SK-N-SH (cell line): ENCODE measurements at regions of chr3 and their contacts with region 1.

Region 1: GRCh38 chr3:11155341-11156025 is 1.2 kb downstream of the HRH1 start:
- DNase-seq: peak; percentile 86
- H3K4me3 ChIP-seq: peak overlapping the region; percentile 71 to 86
- H3K27ac ChIP-seq: peak overlapping the region in 1 of 2 experiments; percentile 85; a peak in 2 of 4 replicates
- H3K4me1 ChIP-seq: peaks cover 7 to 15% of the 10 kb centered on the region in 2 experiments; a peak in 3 of 4 replicates
- H3K27me3 ChIP-seq: no peaks in the 10 kb centered on the region
- CTCF ChIP-seq: peak; percentile 85
- EP300 ChIP-seq: no peak
- RAD21 ChIP-seq: peak; percentile 81

Region 2: DNA sequence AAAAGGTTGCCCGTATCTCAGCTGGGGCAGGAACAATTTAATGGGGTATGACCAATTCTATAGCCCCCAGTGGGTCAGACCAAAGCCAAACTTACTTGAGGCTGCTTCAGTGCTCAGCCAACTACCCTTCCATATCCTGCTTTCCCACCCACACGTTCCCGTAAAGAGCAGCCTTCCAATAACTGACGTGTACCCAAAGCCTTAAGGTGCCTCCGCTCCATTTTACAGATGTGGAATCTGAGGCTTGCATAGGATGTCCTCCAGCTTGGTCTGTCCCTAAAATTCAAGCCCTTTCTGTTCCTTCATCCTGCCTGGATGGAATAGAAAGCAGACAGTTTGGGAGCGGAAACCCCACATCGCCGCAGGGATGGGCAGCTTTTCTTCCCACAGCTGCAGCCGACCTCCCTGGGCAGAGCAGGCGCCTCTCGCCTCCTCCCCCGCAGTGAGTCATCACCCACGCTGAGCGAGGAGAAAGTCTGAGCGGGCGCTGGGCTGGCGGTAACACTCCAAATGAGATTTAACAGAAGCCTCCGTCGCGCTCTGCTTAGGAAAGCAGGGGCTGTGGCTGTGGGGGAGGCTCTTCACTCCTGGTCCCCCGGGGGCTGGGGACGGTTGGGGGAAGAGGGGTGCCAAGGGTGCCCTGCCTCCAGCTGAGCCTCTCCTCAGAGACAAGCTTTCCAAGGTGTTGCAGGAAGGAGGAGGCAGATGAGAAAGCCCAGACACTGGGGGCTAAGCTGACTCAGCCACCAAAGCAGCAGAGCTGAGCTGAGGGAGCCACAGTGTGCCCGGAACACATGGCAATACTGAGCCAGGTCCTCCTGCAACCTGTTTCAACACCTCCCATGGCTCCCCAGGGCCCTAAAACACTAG is 59.0 kb before region 1 on chr3:
- CTCF ChIA-PET with region 1: interaction called, 13 read pairs
- POLR2A ChIA-PET with region 1: no interaction called
- DNase-seq: peak; percentile 91
- H3K4me3 ChIP-seq: peak overlapping the region; percentile 43 to 54
- H3K27ac ChIP-seq: peak overlapping the region; percentile 84 to 96
- H3K4me1 ChIP-seq: peaks cover 6 to 17% of the 10 kb centered on the region in 2 experiments; a peak in 1 of 4 replicates
- H3K27me3 ChIP-seq: no peaks in the 10 kb centered on the region
- CTCF ChIP-seq: no peak
- EP300 ChIP-seq: peak; percentile 53 to 81; a peak in 3 of 4 replicates
- RAD21 ChIP-seq: peak; percentile 17; the same call in 1 of the 2 replicates

Region 3: DNA sequence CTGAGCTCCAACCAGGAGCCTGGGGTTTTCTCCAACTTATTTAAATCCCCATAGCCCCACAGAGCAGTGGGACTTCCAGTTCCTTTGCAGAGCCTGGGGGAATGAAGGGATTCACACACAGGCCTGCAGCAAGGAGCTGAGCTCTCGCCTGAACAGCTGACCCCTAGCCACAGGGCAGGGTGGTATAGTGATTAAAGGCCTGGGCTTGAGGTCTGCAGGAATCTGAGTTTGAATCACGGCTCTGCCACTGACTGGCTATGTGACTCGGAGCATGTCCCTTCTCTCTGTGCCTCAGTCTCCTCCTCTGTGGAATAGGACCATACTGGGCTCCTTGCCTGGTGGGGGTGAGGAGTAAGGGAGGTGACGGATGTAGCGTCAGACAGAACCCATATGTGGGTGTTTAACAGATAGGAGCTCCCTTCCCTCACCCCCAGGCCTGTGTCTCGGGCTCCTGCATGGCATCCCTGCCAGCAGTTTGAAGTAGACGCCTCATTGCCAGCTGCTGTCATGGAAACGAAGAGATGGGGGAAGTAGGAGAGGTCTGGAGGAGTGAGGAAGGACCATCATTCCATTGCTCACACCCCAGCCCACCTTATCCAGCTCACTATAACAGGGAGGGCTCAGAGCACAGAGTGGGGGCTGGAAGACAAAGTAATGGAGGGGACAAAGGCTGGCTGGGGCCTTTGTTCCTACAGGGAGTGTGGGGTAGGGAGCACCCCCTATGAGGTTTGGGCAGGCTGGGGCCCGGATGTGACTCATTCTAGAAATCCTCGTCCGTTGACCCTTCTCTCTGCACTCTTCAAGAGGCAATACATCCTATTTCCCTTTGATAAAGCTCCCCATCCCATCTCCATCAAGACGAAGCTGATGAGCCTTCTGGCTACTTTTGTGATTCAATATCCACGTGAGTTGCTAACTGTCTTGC is 13.7 kb after region 1 on chr3:
- CTCF ChIA-PET with region 1: interaction called, 24 read pairs
- POLR2A ChIA-PET with region 1: no interaction called
- DNase-seq: no peak
- H3K4me3 ChIP-seq: no peak overlapping the region
- H3K27ac ChIP-seq: peak overlapping the region in 1 of 2 experiments; percentile 74; a peak in 2 of 4 replicates
- H3K4me1 ChIP-seq: peaks cover 7 to 30% of the 10 kb centered on the region in 2 experiments; a peak in 3 of 4 replicates
- H3K27me3 ChIP-seq: no peaks in the 10 kb centered on the region
- CTCF ChIP-seq: no peak
- EP300 ChIP-seq: peak in 1 of 2 experiments; percentile 49; a peak in 1 of 4 replicates
- RAD21 ChIP-seq: no peak

Region 4: DNA sequence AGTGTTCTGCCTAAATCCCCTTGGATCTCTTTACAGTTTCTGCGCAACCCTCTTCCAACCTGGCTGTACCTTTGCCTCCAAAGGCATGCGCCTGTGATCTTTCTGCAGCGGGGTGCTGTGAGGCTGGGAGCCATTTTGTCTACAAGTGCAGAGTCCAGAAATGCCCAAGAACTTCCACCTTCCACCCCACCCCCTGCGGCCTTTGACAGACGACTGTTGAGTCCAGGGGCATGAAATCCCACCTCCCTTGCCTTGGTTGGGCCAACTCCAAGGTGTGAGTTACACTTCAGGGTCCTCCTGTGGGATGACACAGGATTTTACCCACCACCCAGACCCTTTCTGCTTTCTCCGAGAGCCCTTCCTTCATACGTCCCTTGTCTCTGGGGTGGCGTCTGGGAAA is 22.9 kb after region 1 on chr3:
- CTCF ChIA-PET with region 1: interaction called, 10 read pairs
- POLR2A ChIA-PET with region 1: no interaction called
- DNase-seq: no peak
- H3K4me3 ChIP-seq: no peak overlapping the region
- H3K27ac ChIP-seq: no peak overlapping the region
- H3K4me1 ChIP-seq: peaks cover 0 to 3% of the 10 kb centered on the region in 2 experiments; a peak in 1 of 4 replicates
- H3K27me3 ChIP-seq: no peaks in the 10 kb centered on the region
- CTCF ChIP-seq: no peak
- EP300 ChIP-seq: no peak
- RAD21 ChIP-seq: no peak

Region 5: DNA sequence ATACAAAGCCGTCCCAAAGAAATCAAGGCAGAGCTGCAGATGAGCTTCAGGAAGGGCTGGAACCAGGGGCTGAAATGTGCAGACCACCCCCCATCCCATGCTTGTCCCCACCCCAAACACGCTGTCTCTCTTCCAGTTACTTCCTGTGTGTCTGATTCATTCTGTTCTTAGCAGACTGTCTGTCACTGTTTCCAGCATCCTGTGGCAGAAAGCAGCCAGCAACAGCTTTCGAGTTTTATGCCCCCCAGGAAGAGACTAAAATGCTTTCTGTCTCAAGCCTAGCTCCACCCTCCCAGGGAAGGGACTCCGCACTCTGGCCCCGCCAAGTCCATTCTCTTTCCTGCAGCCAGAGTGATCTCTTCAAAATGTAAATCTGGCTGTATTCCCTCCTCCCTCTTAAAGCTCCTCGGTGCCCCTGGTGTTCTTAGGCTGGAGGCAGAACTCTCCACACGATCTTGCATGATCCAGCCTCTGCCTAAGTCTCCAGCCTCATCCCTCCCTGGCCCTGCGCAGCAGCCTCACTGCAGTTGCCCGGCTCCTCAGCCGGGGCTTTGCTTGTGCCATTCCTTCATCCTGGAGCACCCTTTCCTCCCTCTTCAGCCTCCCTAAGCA is 40.3 kb after region 1 on chr3:
- CTCF ChIA-PET with region 1: interaction called, 17 read pairs
- POLR2A ChIA-PET with region 1: no interaction called
- DNase-seq: no peak
- H3K4me3 ChIP-seq: peak overlapping the region; percentile 14 to 47; a peak in 3 of 4 replicates
- H3K27ac ChIP-seq: peak overlapping the region; percentile 50 to 94
- H3K4me1 ChIP-seq: peaks cover 18 to 34% of the 10 kb centered on the region in 2 experiments
- H3K27me3 ChIP-seq: no peaks in the 10 kb centered on the region
- CTCF ChIP-seq: no peak
- EP300 ChIP-seq: peak in 1 of 2 experiments; percentile 27; a peak in 1 of 4 replicates
- RAD21 ChIP-seq: no peak

Region 6: GRCh38 chr3:11201246-11202024 is 46.0 kb after region 1 on chr3:
- CTCF ChIA-PET with region 1: interaction called, 41 read pairs
- POLR2A ChIA-PET with region 1: no interaction called
- DNase-seq: no peak
- H3K4me3 ChIP-seq: no peak overlapping the region
- H3K27ac ChIP-seq: peak overlapping the region; percentile 73 to 94
- H3K4me1 ChIP-seq: peaks cover 29 to 36% of the 10 kb centered on the region in 2 experiments
- H3K27me3 ChIP-seq: no peaks in the 10 kb centered on the region
- CTCF ChIP-seq: no peak
- EP300 ChIP-seq: peak in 1 of 2 experiments; percentile 70; a peak in 2 of 4 replicates
- RAD21 ChIP-seq: no peak

Region 7: GRCh38 chr3:11335056-11335608 is 179.6 kb after region 1 on chr3:
- CTCF ChIA-PET with region 1: interaction called, 72 read pairs
- POLR2A ChIA-PET with region 1: no interaction called
- DNase-seq: peak; percentile 58
- H3K4me3 ChIP-seq: no peak overlapping the region
- H3K27ac ChIP-seq: peak overlapping the region in 1 of 2 experiments; percentile 30; a peak in 1 of 4 replicates
- H3K4me1 ChIP-seq: peaks cover 0 to 5% of the 10 kb centered on the region in 2 experiments; a peak in 1 of 4 replicates
- H3K27me3 ChIP-seq: no peaks in the 10 kb centered on the region
- CTCF ChIP-seq: peak; percentile 83
- EP300 ChIP-seq: no peak
- RAD21 ChIP-seq: peak; percentile 87